Tibial artery (tissue), 4 donors: ENCODE measurements at regions of chr9 and their contacts with region 1.

Region 1: GRCh38 chr9:73497796-73498195 is 346.1 kb downstream of the ANXA1 start:
- DNase-seq: no peak
- H3K4me3 ChIP-seq: no peak overlapping the region
- H3K27ac ChIP-seq: no peak overlapping the region
- H3K4me1 ChIP-seq: no peaks in the 10 kb centered on the region
- H3K27me3 ChIP-seq: no peaks in the 10 kb centered on the region
- CTCF ChIP-seq: no peak

Region 2: DNA sequence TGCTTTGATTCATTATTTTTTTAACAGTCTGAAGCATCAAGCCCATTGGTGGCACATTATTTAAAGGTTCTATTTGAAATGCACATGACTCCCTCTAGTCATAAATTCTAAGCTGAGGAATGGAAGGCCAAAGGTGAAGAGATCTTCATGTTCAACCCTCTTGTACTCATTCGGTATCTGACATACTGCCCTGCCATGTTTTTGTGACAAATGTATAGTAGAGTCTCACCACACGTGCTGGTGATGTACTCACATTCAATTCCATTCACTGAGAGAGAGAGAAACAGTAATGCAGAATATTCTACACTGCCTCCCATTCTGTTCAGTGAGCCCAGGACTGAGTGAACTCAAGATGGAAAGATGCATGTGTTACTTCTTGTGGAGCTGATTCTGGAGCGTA is 1250.2 kb before region 1 on chr9:
- intact Hi-C with region 1: loop called (anchors 10 kb)
- DNase-seq: no peak
- H3K4me3 ChIP-seq: no peak overlapping the region
- H3K27ac ChIP-seq: no peak overlapping the region
- H3K4me1 ChIP-seq: no peaks in the 10 kb centered on the region
- H3K27me3 ChIP-seq: no peaks in the 10 kb centered on the region
- CTCF ChIP-seq: no peak